ENCODE measurements at regions of chr18 and their contacts with region 1.

Region 1: GRCh38 chr18:457140-457519 is 43.4 kb downstream of the COLEC12 start:
- DNase-seq: peak; percentile 82
- H3K4me3 ChIP-seq: peak overlapping the region; percentile 7 to 30 (median 22)
- H3K27ac ChIP-seq: peak overlapping the region; percentile 74 to 86 (median 82)
- H3K4me1 ChIP-seq: peaks cover 0 to 50% (median 34%) of the 10 kb centered on the region in 4 donors
- H3K27me3 ChIP-seq: no peaks in the 10 kb centered on the region
- CTCF ChIP-seq: no peak
- EP300 ChIP-seq: no peak
- POLR2A ChIP-seq: no peak

Region 2: DNA sequence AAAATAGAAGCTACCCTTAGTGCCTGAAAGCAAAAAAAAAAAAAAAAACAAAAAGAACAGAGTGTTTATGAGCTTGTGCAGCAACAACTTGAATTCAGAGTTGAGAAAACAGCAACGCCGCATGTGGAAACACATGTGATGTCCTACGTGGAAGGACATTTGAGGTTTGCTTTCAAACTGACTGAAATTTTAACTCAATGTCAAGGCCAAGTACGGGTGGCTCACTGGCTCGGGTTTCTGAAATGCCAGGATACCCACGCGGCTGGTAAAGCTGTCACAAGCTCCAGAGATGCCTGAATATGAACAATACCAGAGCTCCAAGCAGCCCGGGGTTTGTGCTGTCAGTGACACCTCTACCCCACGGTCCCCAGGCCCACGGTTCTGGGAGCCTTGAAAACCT is 117.1 kb before region 1 on chr18:
- intact Hi-C with region 1: loop called (anchors 5 kb)
- DNase-seq: peak; percentile 84
- H3K4me3 ChIP-seq: no peak overlapping the region
- H3K27ac ChIP-seq: peak overlapping the region in 3 of 4 donors; percentile 63 to 77 (median 71)
- H3K4me1 ChIP-seq: peaks cover 0 to 26% (median 20%) of the 10 kb centered on the region in 4 donors
- H3K27me3 ChIP-seq: no peaks in the 10 kb centered on the region
- CTCF ChIP-seq: no peak
- EP300 ChIP-seq: peak in 2 of 4 donors; percentile 47 to 51
- POLR2A ChIP-seq: no peak